ENCODE measurements at regions of chrX and their contacts with region 1.

Region 1: DNA sequence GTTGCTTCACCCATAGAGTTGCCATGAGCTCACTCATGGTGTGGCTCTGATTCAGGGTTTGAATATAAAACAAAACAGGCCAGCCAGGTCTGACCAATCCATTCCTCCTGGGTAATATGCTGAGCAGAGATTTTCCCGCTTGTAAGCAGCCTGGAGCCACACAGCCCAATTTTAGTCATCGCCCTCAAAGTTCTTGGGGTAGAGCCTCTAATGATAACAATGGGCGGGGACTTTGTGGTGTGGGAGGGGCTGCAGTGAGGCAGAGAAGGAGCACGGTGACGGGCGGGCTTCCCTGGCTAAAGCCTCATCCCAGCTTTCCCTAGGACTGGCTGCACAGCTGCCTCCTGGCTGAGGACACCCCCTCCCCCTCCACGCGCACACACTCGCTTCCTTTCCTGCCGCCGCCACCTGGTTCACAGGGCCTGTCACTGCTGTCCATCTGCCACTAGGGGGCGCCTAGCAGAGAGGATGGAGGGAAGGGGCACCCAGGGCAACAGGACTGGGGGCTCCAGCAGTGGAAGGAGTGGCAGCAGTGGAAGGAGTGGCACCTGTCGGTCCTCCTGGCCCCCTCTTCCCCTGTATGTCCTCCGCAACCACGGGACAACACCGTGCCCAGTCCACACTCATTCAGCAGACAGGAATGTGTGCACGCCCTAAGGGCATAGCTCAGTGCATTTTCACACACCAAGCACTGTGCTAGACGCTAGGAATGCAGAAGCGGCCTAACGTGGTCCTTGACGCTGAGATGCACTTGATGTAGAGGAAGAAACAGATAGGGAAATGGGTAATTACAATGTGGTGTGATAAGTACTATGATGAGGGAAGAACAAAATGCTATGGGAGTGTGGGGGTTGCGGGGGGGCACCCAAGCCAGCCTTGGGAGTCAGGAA is 26.8 kb downstream of the PRPS1 start:
- DNase-seq: peak; percentile 59 to 82
- ATAC-seq: peak; percentile 75 to 87 (median 80)
- H3K4me3 ChIP-seq: no peak overlapping the region
- H3K27ac ChIP-seq: peak overlapping the region; percentile 41
- H3K4me1 ChIP-seq: no peaks in the 10 kb centered on the region
- H3K27me3 ChIP-seq: peaks cover 0 to 6% (median 0%) of the 10 kb centered on the region in 3 donors
- CTCF ChIP-seq: peak; percentile 64

Region 2: GRCh38 chrX:107676559-107677378 is 21.7 kb after region 1 on chrX:
- intact Hi-C with region 1: no loop called
- DNase-seq: peak; percentile 89 to 93
- ATAC-seq: peak; percentile 66 to 73 (median 69)
- H3K4me3 ChIP-seq: peak overlapping the region; percentile 59
- H3K27ac ChIP-seq: peak overlapping the region; percentile 83
- H3K4me1 ChIP-seq: peaks cover 24% of the 10 kb centered on the region
- H3K27me3 ChIP-seq: peaks cover 0 to 21% (median 0%) of the 10 kb centered on the region in 3 donors
- CTCF ChIP-seq: no peak

Region 3: GRCh38 chrX:107718156-107718621 is 63.1 kb after region 1 on chrX:
- intact Hi-C with region 1: loop called in 1 of 2 experiments (anchors 2 kb)
- DNase-seq: peak; percentile 64 to 75
- ATAC-seq: peak; percentile 62 to 74 (median 70)
- H3K4me3 ChIP-seq: no peak overlapping the region
- H3K27ac ChIP-seq: peak overlapping the region; percentile 86
- H3K4me1 ChIP-seq: peaks cover 30% of the 10 kb centered on the region
- H3K27me3 ChIP-seq: peaks cover 0 to 23% (median 0%) of the 10 kb centered on the region in 3 donors
- CTCF ChIP-seq: peak; percentile 88

Region 4: GRCh38 chrX:107894038-107894437 is 238.9 kb after region 1 on chrX:
- intact Hi-C with region 1: loop called (anchors 5 kb)
- DNase-seq: no peak
- ATAC-seq: peak; percentile 69 to 89 (median 77)
- H3K4me3 ChIP-seq: no peak overlapping the region
- H3K27ac ChIP-seq: no peak overlapping the region
- H3K4me1 ChIP-seq: no peaks in the 10 kb centered on the region
- H3K27me3 ChIP-seq: peaks cover 0 to 18% (median 0%) of the 10 kb centered on the region in 3 donors
- CTCF ChIP-seq: peak; percentile 73

Region 5: DNA sequence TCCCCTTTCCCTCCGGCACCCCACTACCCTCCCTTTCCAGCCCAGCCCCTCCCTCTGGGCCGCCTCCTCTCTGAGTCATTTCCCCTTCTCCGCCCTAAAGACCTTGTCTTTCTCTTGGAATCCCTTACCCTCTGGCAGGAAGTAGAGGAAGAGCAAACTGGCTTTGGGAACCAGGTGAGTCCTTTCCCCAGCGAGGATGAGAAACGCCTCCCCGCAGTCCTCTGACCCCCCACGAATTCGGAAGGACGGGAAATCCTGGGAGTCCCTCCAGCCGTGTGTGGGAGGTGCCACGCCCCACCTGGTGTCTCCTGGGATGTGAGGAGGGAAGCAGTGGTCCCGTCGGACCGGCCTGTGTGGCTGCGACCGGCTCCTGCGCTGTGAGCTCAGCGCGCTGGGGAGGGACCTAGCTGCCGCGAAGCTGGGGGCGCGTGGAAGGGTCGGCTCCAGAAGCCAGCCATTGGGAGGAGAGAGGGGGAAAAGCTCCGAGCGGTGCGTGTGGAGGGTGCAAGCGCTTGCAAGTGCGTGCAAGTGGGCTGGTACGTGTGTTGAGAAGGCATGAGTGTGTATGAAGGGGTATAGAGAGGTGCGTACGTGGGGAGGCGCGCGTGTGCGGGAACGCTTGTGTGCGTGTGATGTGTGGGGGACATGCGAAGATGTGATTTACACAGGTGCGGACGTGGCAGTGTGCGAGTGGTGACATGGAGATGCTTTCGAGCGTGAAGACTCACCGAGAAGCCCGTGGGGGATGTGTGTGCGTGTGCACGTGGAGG is 280.7 kb after region 1 on chrX:
- intact Hi-C with region 1: no loop called
- DNase-seq: no peak
- ATAC-seq: no peak
- H3K4me3 ChIP-seq: no peak overlapping the region
- H3K27ac ChIP-seq: no peak overlapping the region
- H3K4me1 ChIP-seq: peaks cover 4% of the 10 kb centered on the region
- H3K27me3 ChIP-seq: peaks cover 0 to 23% (median 0%) of the 10 kb centered on the region in 3 donors
- CTCF ChIP-seq: no peak

Region 6: GRCh38 chrX:108070891-108071290 is 415.8 kb after region 1 on chrX:
- intact Hi-C with region 1: loop called in 1 of 2 experiments (anchors 10 kb)
- DNase-seq: no peak
- ATAC-seq: peak; percentile 30 to 77 (median 54)
- H3K4me3 ChIP-seq: no peak overlapping the region
- H3K27ac ChIP-seq: no peak overlapping the region
- H3K4me1 ChIP-seq: no peaks in the 10 kb centered on the region
- H3K27me3 ChIP-seq: peaks cover 0 to 39% (median 0%) of the 10 kb centered on the region in 3 donors
- CTCF ChIP-seq: no peak

Measured in psoas muscle (tissue), 8 donors.